Sigmoid colon (tissue), 7 donors: ENCODE measurements at regions of chr10 and their contacts with region 1.

Region 1: GRCh38 chr10:63629363-63630084 is 108.3 kb downstream of the REEP3 start:
- DNase-seq: peak; percentile 100
- H3K4me3 ChIP-seq: peak overlapping the region; percentile 49 to 65 (median 57)
- H3K27ac ChIP-seq: peak overlapping the region; percentile 95 to 98 (median 98)
- H3K4me1 ChIP-seq: peaks cover 0 to 33% (median 28%) of the 10 kb centered on the region in 4 donors
- H3K27me3 ChIP-seq: no peaks in the 10 kb centered on the region
- CTCF ChIP-seq: peak; percentile 35 to 61 (median 50)
- EP300 ChIP-seq: peak; percentile 71 to 92 (median 85)
- POLR2A ChIP-seq: no peak

Region 2: DNA sequence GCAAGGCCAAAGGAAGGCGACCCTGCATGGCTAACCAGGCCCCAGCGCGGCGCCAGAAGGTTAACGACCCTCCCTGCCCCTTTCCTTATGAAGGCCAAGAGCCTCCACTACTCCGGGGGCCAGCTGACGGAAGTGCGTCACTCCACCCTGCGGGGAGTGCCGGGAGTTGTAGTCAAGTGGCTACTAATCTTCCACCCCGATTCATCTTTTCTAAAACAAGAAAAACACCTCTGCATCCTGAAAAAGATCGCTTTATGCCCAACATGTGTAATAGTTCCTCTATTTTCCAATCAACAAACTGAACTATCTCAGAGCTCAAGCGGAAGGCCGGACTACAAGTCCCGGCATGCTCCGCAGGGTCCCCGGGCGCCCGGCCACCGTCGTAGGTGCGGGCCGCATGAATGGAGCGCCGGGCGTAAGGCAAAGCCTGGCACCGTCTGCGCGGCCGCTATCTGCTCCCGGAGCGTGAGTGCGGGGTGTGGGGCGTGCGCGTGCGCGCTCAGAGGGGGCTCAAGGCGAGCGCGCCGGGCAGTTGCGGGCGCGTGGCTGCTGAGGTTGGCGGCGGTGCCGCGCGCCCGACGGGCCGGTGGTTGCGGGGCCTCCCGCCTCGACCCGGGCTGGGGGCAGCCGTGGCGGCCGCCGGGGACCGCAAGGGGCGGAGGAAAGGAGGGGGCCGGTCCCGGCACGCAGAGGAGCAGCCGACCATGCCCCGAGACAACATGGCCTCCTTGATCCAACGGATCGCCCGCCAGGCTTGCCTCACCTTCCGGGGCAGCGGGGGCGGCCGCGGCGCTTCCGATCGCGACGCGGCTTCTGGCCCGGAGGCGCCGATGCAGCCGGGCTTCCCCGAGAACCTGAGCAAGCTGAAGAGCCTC is 824.9 kb before region 1 on chr10 and contains the start of gene ADO:
- intact Hi-C with region 1: loop called (anchors 10 kb)
- DNase-seq: peak; percentile 93
- H3K4me3 ChIP-seq: peak within 1 kb of the TSS; percentile 78 to 85 (median 78)
- H3K27ac ChIP-seq: peak within 1 kb of the TSS; percentile 91 to 95 (median 94)
- H3K4me1 ChIP-seq: peaks cover 0 to 40% (median 38%) of the 10 kb centered on the region in 4 donors
- H3K27me3 ChIP-seq: no peaks in the 10 kb centered on the region
- CTCF ChIP-seq: no peak
- EP300 ChIP-seq: peak in 1 of 4 donors; percentile 38
- POLR2A ChIP-seq: peak; percentile 6 to 31
- total RNA-seq, gene ADO: 13.0 to 18.9 (median 18.0) TPM

Region 3: GRCh38 chr10:63206997-63207811 is 422.3 kb before region 1 on chr10:
- intact Hi-C with region 1: loop called (anchors 5 kb)
- DNase-seq: no peak
- H3K4me3 ChIP-seq: peak overlapping the region in 3 of 4 donors; percentile 5 to 11 (median 8)
- H3K27ac ChIP-seq: peak overlapping the region; percentile 53 to 79 (median 72)
- H3K4me1 ChIP-seq: peaks cover 0 to 64% (median 49%) of the 10 kb centered on the region in 4 donors
- H3K27me3 ChIP-seq: no peaks in the 10 kb centered on the region
- CTCF ChIP-seq: no peak
- EP300 ChIP-seq: no peak
- POLR2A ChIP-seq: no peak

Region 4: GRCh38 chr10:63268798-63269503 is 360.6 kb before region 1 on chr10:
- intact Hi-C with region 1: loop called (anchors 2 kb)
- DNase-seq: peak; percentile 95
- H3K4me3 ChIP-seq: peak overlapping the region; percentile 38 to 55 (median 52)
- H3K27ac ChIP-seq: peak overlapping the region; percentile 83 to 91 (median 90)
- H3K4me1 ChIP-seq: peaks cover 0 to 35% (median 19%) of the 10 kb centered on the region in 4 donors
- H3K27me3 ChIP-seq: no peaks in the 10 kb centered on the region
- CTCF ChIP-seq: peak in 2 of 4 experiments; percentile 14 to 44
- EP300 ChIP-seq: peak in 3 of 4 donors; percentile 49 to 92 (median 56)
- POLR2A ChIP-seq: peak; percentile 70 to 89

Region 5: GRCh38 chr10:63521416-63522276 is 107.9 kb before region 1 on chr10:
- intact Hi-C with region 1: loop called (anchors 1 kb)
- DNase-seq: peak; percentile 88
- H3K4me3 ChIP-seq: peak overlapping the region; percentile 80 to 92 (median 86)
- H3K27ac ChIP-seq: peak overlapping the region; percentile 98 to 100 (median 98)
- H3K4me1 ChIP-seq: peaks cover 0 to 80% (median 52%) of the 10 kb centered on the region in 4 donors
- H3K27me3 ChIP-seq: no peaks in the 10 kb centered on the region
- CTCF ChIP-seq: no peak
- EP300 ChIP-seq: no peak
- POLR2A ChIP-seq: peak in 1 of 2 donors; percentile 59

Region 6: DNA sequence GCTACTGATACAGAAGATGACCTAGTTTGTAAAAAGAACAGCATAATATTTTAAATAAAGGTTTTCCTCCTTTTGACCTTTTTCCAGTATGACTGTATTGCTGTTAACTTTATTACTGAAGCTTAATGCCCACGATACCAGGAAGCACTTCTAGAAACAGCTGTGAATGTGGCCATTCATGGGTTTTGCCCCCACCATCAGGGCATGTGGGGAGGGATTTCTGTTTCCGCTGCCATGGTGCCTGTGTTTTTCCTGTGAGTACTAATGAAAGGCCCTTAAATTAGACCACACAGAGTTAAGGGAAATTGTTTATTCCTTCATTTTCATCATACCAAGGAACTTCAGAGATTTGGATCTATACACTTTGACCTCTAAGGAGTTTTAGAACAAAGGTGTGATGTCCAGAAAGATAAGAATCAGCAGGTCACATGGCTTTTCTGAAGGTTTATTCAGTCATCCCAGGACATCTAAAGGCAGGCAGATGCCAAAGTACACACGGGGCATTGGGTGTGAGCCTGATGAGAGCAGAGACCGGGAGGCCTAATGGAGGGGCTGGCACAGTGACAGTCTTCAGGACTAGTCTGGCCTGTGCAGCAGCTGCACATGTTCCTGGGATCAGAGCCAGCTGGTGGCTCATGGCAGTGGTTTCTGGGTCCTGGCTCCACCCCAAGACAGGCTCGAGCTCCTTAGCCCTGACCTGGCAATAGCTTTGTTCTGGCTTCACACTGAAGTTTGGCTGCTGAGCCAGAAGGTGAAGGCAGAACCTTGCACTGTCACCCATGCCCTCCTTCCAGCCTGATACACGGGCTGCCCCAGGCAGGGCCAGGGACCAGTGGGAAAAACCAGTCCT is 82.6 kb after region 1 on chr10:
- intact Hi-C with region 1: loop called (anchors 2 kb)
- DNase-seq: peak; percentile 98
- H3K4me3 ChIP-seq: no peak overlapping the region
- H3K27ac ChIP-seq: peak overlapping the region; percentile 80 to 94 (median 84)
- H3K4me1 ChIP-seq: peaks cover 0 to 53% (median 47%) of the 10 kb centered on the region in 4 donors
- H3K27me3 ChIP-seq: no peaks in the 10 kb centered on the region
- CTCF ChIP-seq: no peak
- EP300 ChIP-seq: peak; percentile 27 to 83 (median 41)
- POLR2A ChIP-seq: no peak